ENCODE measurements at regions of chr19 and their contacts with region 1.

Region 1: DNA sequence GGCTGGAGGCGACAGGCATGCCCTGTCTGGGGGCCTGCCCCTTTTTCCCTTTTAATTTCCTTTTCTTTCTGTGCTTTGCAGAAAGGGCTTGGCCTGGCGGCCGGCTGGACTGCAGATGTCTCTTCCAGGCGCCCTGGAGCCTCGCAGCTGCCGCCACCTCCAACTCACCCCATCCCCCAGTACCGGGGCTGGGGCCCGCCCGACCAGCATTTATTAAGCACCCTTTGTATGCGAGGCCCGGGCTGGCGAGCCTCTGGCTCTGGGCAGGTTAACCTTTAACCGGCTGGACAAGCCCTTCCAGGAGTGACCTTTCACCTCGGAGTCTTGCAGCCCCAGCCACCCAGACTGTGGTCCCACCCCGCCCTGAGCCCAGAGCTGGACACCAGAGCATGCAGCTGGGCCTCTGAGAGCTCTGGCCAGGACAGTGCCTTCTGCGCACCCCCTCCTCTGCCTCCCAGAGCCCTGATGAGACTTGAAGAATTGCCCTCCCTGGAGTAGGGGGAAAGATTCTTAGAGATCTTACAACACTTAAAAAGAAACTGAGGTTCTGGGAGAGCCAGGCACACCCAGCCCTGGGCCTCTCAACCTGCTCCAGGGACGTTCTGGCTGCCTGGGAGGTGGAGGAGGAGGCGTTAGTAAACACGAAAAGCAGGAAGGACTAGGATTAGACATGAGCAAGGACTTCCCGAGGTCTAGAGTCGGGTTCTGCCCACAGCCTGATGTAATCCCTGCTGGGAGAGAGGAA is 1.1 kb upstream of the NR2F6 start:
- DNase-seq: peak in 3 of 5 donors; percentile 50 to 74 (median 64)
- ATAC-seq: peak in 3 of 4 donors; percentile 1 to 25 (median 17)
- H3K4me3 ChIP-seq: peak overlapping the region in 11 of 12 donors; percentile 10 to 96 (median 86)
- H3K27ac ChIP-seq: peak overlapping the region; percentile 56 to 94 (median 78)
- H3K4me1 ChIP-seq: peaks cover 6 to 40% (median 24%) of the 10 kb centered on the region in 12 donors
- H3K27me3 ChIP-seq: no peaks in the 10 kb centered on the region
- CTCF ChIP-seq: no peak
- POLR2A ChIP-seq: no peak

Region 2: GRCh38 chr19:17226002-17226933 is 20.6 kb before region 1 on chr19 and contains the start of gene OCEL1:
- intact Hi-C with region 1: loop called in 1 of 10 experiments (anchors 2 kb)
- DNase-seq: peak; percentile 98 to 99 (median 99)
- ATAC-seq: peak; percentile 96 to 98 (median 98)
- H3K4me3 ChIP-seq: peak within 1 kb of the TSS; percentile 26 to 74 (median 67)
- H3K27ac ChIP-seq: peak within 1 kb of the TSS; percentile 77 to 93 (median 88)
- H3K4me1 ChIP-seq: peaks cover 0 to 16% (median 10%) of the 10 kb centered on the region in 12 donors
- H3K27me3 ChIP-seq: no peaks in the 10 kb centered on the region
- CTCF ChIP-seq: peak in 1 of 12 donors; percentile 8
- POLR2A ChIP-seq: peak in 1 of 2 donors; percentile 91
- total RNA-seq, gene OCEL1: 8.7 to 27.2 (median 16.8) TPM